Caco-2 (cell line): ENCODE measurements at regions of chr10 and their contacts with region 1.

Region 1: GRCh38 chr10:102503281-102504220 is at the start of gene SUFU:
- DNase-seq: peak; percentile 98 to 99
- H3K4me3 ChIP-seq: peak within 1 kb of the TSS; percentile 85
- H3K4me3 Mint-ChIP-seq: no peak within 1 kb of the TSS
- H3K27ac Mint-ChIP-seq: no peak within 1 kb of the TSS
- H3K4me1 ChIP-seq: no peaks in the 10 kb centered on the region
- H3K4me1 Mint-ChIP-seq: no peaks in the 10 kb centered on the region
- H3K27me3 ChIP-seq: no peaks in the 10 kb centered on the region
- H3K27me3 Mint-ChIP-seq: no peaks in the 10 kb centered on the region
- CTCF ChIP-seq: peak; percentile 76 to 96
- total RNA-seq, gene SUFU: 10.6 and 11.4 TPM in 2 replicates

Region 2: GRCh38 chr10:102245101-102245931 is 258.2 kb before region 1 on chr10 and contains the start of gene GBF1:
- CTCF ChIA-PET with region 1: interaction called, 3 read pairs
- POLR2A ChIA-PET with region 1: no interaction called
- intact Hi-C with region 1: loop called (anchors 1 kb)
- DNase-seq: peak; percentile 96 to 97
- H3K4me3 ChIP-seq: peak within 1 kb of the TSS; percentile 73
- H3K4me3 Mint-ChIP-seq: peak within 1 kb of the TSS; percentile 94
- H3K27ac Mint-ChIP-seq: peak within 1 kb of the TSS; percentile 87
- H3K4me1 ChIP-seq: peaks cover 19% of the 10 kb centered on the region
- H3K4me1 Mint-ChIP-seq: peaks cover 46% of the 10 kb centered on the region
- H3K27me3 ChIP-seq: no peaks in the 10 kb centered on the region
- H3K27me3 Mint-ChIP-seq: peaks cover 3% of the 10 kb centered on the region
- CTCF ChIP-seq: no peak
- total RNA-seq, gene GBF1: 69.1 and 69.8 TPM in 2 replicates

Region 3: DNA sequence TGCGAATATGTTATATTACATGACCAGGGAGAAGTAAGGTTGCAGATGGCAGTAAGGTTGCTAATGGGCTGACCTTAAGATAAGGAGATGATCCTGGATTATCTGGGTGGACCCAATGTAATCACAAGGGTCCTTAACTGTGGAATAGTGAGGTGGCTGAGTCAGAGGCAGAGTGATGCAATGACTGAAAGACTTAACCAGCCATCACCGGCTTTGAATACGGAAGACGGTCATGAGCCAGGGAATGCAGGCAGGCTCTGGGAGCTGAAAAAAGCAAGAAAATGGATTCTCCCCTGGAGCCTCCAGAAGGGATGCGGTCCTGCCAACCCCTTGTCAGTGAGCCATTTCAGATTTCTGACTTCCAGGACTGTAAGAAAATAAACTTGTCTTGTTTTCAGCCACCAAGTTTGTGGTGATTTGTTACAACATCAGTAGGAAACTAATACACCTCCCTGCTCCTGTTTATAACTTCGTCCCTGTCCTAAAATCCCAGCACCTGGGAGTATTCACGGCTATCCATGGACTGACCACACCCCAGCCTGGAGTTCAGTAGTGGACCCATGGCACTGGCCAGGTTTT is 47.6 kb before region 1 on chr10:
- CTCF ChIA-PET with region 1: interaction called, 3 read pairs
- POLR2A ChIA-PET with region 1: interaction called, 3 read pairs
- intact Hi-C with region 1: loop called (anchors 1 kb)
- DNase-seq: peak; percentile 76 to 82
- H3K4me3 ChIP-seq: no peak overlapping the region
- H3K4me3 Mint-ChIP-seq: peak overlapping the region; percentile 26
- H3K27ac Mint-ChIP-seq: peak overlapping the region; percentile 89
- H3K4me1 ChIP-seq: peaks cover 55% of the 10 kb centered on the region
- H3K4me1 Mint-ChIP-seq: peaks cover 27% of the 10 kb centered on the region
- H3K27me3 ChIP-seq: no peaks in the 10 kb centered on the region
- H3K27me3 Mint-ChIP-seq: no peaks in the 10 kb centered on the region
- CTCF ChIP-seq: no peak

Region 4: GRCh38 chr10:102538811-102539210 is 35.3 kb after region 1 on chr10:
- CTCF ChIA-PET with region 1: no interaction called
- POLR2A ChIA-PET with region 1: no interaction called
- intact Hi-C with region 1: loop called (anchors 1 kb)
- DNase-seq: peak in 1 of 2 experiments; percentile 14
- H3K4me3 ChIP-seq: no peak overlapping the region
- H3K4me3 Mint-ChIP-seq: no peak overlapping the region
- H3K27ac Mint-ChIP-seq: peak overlapping the region; percentile 35
- H3K4me1 ChIP-seq: peaks cover 9% of the 10 kb centered on the region; the same call in 1 of the 2 replicates
- H3K4me1 Mint-ChIP-seq: peaks cover 9% of the 10 kb centered on the region
- H3K27me3 ChIP-seq: no peaks in the 10 kb centered on the region
- H3K27me3 Mint-ChIP-seq: no peaks in the 10 kb centered on the region
- CTCF ChIP-seq: no peak

Region 5: DNA sequence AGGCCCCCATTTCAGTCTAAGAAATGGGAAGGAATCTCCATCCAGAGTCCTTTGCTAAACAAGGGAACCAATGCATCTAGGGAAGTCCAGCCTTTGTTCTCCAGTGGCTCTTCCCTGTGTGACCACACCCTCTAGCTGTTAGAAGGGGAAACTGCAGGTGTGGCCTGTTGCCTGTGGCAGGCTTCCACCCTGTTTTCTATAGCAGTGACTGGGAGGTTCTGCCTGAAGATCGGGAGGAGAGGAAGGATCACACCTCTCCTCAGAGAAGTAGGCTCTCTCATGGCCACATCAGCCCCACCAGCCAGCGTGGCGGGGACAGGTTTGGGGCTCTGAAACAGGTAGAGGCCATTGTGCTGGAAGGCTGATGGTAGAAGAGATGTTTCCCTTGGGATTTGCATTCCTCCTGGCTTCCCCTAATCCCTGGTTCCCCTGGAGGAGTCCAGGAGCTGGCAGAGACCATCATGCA is 93.0 kb after region 1 on chr10:
- CTCF ChIA-PET with region 1: interaction called, 7 read pairs
- POLR2A ChIA-PET with region 1: no interaction called
- intact Hi-C with region 1: loop called (anchors 1 kb)
- DNase-seq: peak; percentile 69
- H3K4me3 ChIP-seq: no peak overlapping the region
- H3K4me3 Mint-ChIP-seq: no peak overlapping the region
- H3K27ac Mint-ChIP-seq: no peak overlapping the region
- H3K4me1 ChIP-seq: peaks cover 26% of the 10 kb centered on the region
- H3K4me1 Mint-ChIP-seq: peaks cover 9% of the 10 kb centered on the region
- H3K27me3 ChIP-seq: no peaks in the 10 kb centered on the region
- H3K27me3 Mint-ChIP-seq: no peaks in the 10 kb centered on the region
- CTCF ChIP-seq: peak; percentile 91 to 93

Region 6: GRCh38 chr10:102673236-102673818 is 169.8 kb after region 1 on chr10:
- CTCF ChIA-PET with region 1: no interaction called
- POLR2A ChIA-PET with region 1: no interaction called
- intact Hi-C with region 1: no loop called
- DNase-seq: no peak
- H3K4me3 ChIP-seq: no peak overlapping the region
- H3K4me3 Mint-ChIP-seq: no peak overlapping the region
- H3K27ac Mint-ChIP-seq: no peak overlapping the region
- H3K4me1 ChIP-seq: peaks cover 6% of the 10 kb centered on the region; the same call in 1 of the 2 replicates
- H3K4me1 Mint-ChIP-seq: no peaks in the 10 kb centered on the region
- H3K27me3 ChIP-seq: no peaks in the 10 kb centered on the region
- H3K27me3 Mint-ChIP-seq: no peaks in the 10 kb centered on the region
- CTCF ChIP-seq: no peak

Region 7: DNA sequence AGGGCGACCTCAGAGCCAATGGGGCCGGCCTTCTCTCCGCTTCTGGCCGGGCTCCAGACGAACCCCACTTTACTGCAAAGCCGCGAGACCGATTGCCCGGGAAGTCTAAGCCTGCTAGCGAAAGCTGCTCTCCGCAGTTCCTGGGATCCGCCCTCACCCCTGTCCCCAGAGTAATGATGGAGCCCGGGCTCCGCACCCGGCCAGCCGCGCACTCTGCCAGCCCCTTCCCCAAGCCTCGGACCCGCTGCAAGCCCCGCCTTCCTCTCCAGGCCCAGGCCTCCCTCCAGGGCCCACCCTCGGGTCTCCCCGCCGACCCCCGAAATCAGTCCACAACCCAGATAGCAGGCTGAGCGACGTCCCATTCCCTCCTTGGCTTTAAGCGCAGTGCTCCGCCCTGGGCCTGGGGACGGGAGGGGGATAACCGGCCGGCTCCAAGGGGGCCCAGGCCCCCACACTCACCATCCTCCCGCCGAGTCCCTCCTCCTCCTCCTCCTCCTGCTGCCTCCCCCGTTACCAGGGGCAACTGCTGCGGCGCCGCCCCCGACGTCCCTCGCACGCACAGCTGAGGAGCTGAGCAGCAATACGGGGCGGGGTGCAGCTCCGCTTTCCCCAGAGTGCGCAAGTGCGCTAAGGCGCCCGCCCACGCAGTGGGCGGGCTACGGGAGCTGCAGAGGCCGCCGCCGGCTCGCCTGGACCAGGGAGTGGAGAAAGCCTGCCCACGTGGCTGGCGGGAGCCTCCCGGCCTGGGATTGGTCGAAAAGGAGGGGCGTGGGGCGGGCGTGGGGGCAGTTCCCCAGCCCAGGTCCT is 210.5 kb after region 1 on chr10 and contains the start of gene ARL3:
- CTCF ChIA-PET with region 1: interaction called, 3 read pairs
- POLR2A ChIA-PET with region 1: interaction called, 6 read pairs
- intact Hi-C with region 1: loop called (anchors 5 kb)
- DNase-seq: peak; percentile 98 to 99
- H3K4me3 ChIP-seq: peak within 1 kb of the TSS; percentile 85
- H3K4me3 Mint-ChIP-seq: peak within 1 kb of the TSS; percentile 87
- H3K27ac Mint-ChIP-seq: peak within 1 kb of the TSS; percentile 82
- H3K4me1 ChIP-seq: peaks cover 13% of the 10 kb centered on the region
- H3K4me1 Mint-ChIP-seq: peaks cover 30% of the 10 kb centered on the region
- H3K27me3 ChIP-seq: no peaks in the 10 kb centered on the region
- H3K27me3 Mint-ChIP-seq: no peaks in the 10 kb centered on the region
- CTCF ChIP-seq: peak in 1 of 2 experiments; percentile 54
- total RNA-seq, gene ARL3: 7.8 and 8.0 TPM in 2 replicates